Activated CD4-positive, alpha-beta T cell treated with anti-CD3 and anti-CD28 coated beads for 36 hours (primary cell): ENCODE measurements at regions of chr9 and their contacts with region 1.

Region 1: GRCh38 chr9:15231788-15232635 is 75.0 kb downstream of the TTC39B start:
- DNase-seq: peak; percentile 51
- ATAC-seq: peak; percentile 34
- H3K4me3 Mint-ChIP-seq: no peak overlapping the region
- H3K27ac Mint-ChIP-seq: no peak overlapping the region
- H3K4me1 Mint-ChIP-seq: peaks cover 52% of the 10 kb centered on the region
- H3K27me3 Mint-ChIP-seq: no peaks in the 10 kb centered on the region

Region 2: DNA sequence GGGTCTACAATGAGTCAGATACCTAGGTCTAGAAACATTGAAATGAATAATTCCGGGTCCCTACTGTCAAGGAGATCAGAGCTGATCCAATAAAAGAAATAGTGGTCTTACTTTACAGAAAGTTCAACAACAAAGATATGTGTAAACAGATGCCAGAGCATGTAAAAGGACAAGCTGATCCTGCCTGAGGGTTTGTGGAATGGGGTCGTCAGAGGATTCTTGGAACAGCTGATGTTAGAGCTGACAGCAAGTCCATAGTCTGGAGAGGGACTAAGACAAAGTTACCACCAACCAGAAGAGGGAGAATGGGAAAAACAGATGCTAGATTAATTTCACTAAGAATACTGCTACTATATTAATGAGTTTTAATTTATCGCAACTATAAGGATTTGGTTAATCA is 393.3 kb before region 1 on chr9:
- CTCF ChIA-PET with region 1: no interaction called
- POLR2A ChIA-PET with region 1: no interaction called
- intact Hi-C with region 1: no loop called
- DNase-seq: no peak
- ATAC-seq: no peak
- H3K4me3 Mint-ChIP-seq: no peak overlapping the region
- H3K27ac Mint-ChIP-seq: no peak overlapping the region
- H3K4me1 Mint-ChIP-seq: no peaks in the 10 kb centered on the region
- H3K27me3 Mint-ChIP-seq: peaks cover 17% of the 10 kb centered on the region

Region 3: DNA sequence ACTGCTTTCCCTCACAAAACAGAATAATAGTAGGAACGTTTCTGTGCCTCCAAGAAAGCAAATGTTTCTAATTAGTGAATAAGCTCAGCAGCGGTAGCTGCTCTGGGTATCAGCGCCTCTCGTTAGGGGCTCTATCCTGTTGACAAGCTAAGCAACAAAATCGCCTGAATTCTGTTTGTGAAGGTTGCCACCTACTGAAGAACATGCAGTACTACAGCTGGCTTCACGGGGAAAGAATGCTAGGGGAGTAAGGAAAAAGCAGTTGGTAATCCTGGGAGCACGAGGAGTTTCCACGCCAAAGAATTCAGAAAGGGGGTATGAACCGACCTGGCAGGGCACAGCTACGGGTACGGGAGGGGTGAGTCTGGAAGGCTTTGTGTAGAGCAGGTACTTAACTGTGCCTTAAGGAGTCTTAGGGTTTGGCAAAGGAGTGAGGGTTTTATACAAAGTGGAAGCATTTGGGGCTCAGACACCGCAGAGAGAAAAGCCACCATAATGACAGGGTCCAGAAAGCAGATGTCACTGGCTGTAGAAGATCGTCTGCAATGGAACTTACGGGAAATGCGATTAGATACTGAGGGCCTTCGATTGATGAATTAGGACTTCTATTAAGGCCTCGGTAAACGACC is 96.7 kb before region 1 on chr9:
- CTCF ChIA-PET with region 1: no interaction called
- POLR2A ChIA-PET with region 1: no interaction called
- intact Hi-C with region 1: no loop called
- DNase-seq: peak; percentile 57
- ATAC-seq: peak; percentile 88
- H3K4me3 Mint-ChIP-seq: no peak overlapping the region
- H3K27ac Mint-ChIP-seq: no peak overlapping the region
- H3K4me1 Mint-ChIP-seq: peaks cover 7% of the 10 kb centered on the region
- H3K27me3 Mint-ChIP-seq: no peaks in the 10 kb centered on the region

Region 4: DNA sequence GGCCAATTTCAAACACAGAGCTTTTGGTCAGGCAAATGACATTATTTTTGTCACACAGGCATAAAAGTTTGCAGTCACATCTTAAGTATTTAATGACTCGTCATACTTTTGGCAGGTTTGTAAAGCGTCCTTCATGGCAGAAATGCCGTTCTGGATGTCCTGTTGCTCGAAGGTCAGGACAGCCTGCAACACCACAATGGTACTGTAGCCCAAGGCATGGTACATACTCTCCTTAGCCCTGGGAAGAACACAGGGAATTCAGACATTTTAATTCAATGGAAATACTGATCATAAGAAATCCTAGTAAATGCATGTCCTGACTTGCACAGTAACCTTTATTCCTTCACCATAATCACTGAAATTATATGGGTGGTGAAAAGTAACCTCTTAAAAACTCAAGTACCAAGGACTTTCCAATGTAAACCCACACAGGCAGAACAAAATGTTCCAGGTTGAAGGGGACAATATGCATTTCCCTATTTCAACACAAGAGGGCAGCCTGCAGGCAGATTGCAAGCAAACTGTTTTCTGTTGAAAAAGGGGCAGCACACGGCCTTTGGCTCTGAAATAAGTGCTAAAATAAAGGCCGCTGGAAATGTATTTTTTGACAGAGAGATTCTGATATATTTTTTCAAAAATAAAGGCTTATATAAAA is 20.7 kb before region 1 on chr9:
- CTCF ChIA-PET with region 1: interaction called, 25 read pairs
- POLR2A ChIA-PET with region 1: interaction called, 9 read pairs
- intact Hi-C with region 1: loop called (anchors 1 kb)
- DNase-seq: peak; percentile 67
- ATAC-seq: peak; percentile 45
- H3K4me3 Mint-ChIP-seq: no peak overlapping the region
- H3K27ac Mint-ChIP-seq: no peak overlapping the region
- H3K4me1 Mint-ChIP-seq: peaks cover 23% of the 10 kb centered on the region
- H3K27me3 Mint-ChIP-seq: no peaks in the 10 kb centered on the region

Region 5: GRCh38 chr9:15220658-15221318 is 11.2 kb before region 1 on chr9:
- CTCF ChIA-PET with region 1: interaction called, 23 read pairs
- POLR2A ChIA-PET with region 1: no interaction called
- intact Hi-C with region 1: no loop called
- DNase-seq: no peak
- ATAC-seq: no peak
- H3K4me3 Mint-ChIP-seq: no peak overlapping the region
- H3K27ac Mint-ChIP-seq: no peak overlapping the region
- H3K4me1 Mint-ChIP-seq: peaks cover 30% of the 10 kb centered on the region
- H3K27me3 Mint-ChIP-seq: no peaks in the 10 kb centered on the region

Region 6: GRCh38 chr9:15246688-15247087 is 14.7 kb after region 1 on chr9:
- CTCF ChIA-PET with region 1: interaction called, 12 read pairs
- POLR2A ChIA-PET with region 1: no interaction called
- intact Hi-C with region 1: loop called in 1 of 2 experiments (anchors 2 kb)
- DNase-seq: no peak
- ATAC-seq: peak; percentile 44
- H3K4me3 Mint-ChIP-seq: no peak overlapping the region
- H3K27ac Mint-ChIP-seq: no peak overlapping the region
- H3K4me1 Mint-ChIP-seq: peaks cover 52% of the 10 kb centered on the region
- H3K27me3 Mint-ChIP-seq: no peaks in the 10 kb centered on the region

Region 7: DNA sequence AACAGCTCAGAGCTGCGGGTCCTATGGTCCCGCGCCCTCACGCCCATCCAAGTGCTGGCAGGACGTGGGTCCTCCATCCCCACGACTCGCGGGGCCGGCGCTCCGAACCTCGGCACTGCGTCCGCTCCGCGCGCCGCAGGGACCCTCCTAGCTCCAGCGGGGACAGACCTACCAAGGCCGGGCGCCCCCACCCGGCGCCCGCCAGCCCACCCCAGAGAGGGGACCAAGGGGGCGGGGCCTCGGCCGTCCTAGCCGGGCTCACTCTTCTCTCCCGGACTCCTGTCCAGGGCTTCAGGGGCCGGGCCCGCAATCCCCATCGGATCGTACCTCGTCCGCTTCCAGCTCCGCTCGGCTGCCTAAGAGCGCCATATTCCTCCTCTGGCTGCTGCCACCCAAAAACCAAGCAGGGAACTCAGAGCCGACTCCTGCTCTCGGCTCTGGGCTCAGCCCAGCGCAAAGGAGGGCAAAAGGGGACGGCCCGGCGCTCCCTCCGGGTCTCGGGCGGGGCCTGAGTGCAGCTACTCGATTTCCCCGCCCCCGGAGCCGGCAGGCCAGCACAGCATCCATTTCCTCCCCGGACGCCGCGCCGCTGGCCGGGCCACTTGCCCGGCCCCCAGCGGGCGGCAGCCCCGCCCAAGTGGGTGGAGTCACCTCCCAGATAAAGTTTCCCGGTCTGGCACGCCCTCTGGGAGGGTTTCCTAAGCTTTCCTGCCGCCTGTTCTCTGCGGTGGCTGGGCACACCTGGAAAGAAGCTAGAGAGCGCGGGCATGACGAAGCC is 74.9 kb after region 1 on chr9 and contains the start of gene TTC39B:
- CTCF ChIA-PET with region 1: interaction called, 4 read pairs
- POLR2A ChIA-PET with region 1: no interaction called
- intact Hi-C with region 1: loop called (anchors 2 kb)
- DNase-seq: peak; percentile 90
- ATAC-seq: peak; percentile 83
- H3K4me3 Mint-ChIP-seq: peak within 1 kb of the TSS; percentile 98
- H3K27ac Mint-ChIP-seq: peak within 1 kb of the TSS; percentile 98
- H3K4me1 Mint-ChIP-seq: peaks cover 59% of the 10 kb centered on the region
- H3K27me3 Mint-ChIP-seq: no peaks in the 10 kb centered on the region
- total RNA-seq, gene TTC39B: 26.4 to 34.4 TPM

Region 8: GRCh38 chr9:15422372-15423230 is 190.6 kb after region 1 on chr9 and contains the start of gene SNAPC3:
- CTCF ChIA-PET with region 1: no interaction called
- POLR2A ChIA-PET with region 1: no interaction called
- intact Hi-C with region 1: loop called (anchors 1 to 2 kb)
- DNase-seq: peak; percentile 96
- ATAC-seq: peak; percentile 97
- H3K4me3 Mint-ChIP-seq: peak within 1 kb of the TSS; percentile 95
- H3K27ac Mint-ChIP-seq: peak within 1 kb of the TSS; percentile 92
- H3K4me1 Mint-ChIP-seq: peaks cover 32% of the 10 kb centered on the region
- H3K27me3 Mint-ChIP-seq: no peaks in the 10 kb centered on the region
- total RNA-seq, gene SNAPC3: 37.8 to 39.6 TPM

Region 9: DNA sequence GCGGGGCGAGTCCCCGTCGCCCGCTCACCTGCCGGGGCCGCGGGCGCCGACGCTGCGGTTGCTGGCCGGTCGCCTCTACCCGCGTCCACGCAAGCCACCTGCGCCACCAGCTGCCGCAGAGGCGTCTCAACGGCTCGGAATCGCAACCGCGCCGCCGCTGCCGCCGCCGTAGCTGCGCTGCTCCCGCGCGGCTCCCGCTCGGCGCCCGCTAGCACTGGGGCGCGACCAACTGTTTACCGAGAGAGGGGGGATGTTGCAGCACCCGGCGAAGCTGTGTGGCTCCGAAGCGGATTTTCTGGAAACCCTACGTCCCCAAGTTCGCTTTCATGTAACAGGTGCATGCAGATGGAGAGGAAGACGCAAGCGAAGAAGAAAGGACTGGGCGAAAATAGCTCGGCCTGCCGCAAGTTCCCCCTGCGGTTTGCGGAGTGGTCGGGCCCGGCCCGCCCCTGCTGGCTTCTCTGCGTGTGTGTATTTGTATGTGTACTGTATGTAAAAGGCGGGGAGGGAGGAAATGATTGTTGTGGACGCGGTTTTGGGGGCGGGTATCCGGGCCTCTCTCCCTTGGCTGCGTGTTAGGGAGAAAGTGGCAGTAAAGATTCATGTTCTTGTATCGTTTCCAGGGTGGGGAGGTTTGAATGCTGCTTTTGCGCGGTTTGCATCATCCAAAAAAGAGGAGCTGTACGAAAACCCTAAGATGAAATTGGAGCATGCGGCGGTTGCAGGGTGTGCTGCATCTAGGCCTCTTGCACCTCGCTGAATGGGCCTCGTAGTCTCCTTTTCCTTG is 279.0 kb after region 1 on chr9 and contains the start of gene PSIP1:
- CTCF ChIA-PET with region 1: no interaction called
- POLR2A ChIA-PET with region 1: no interaction called
- intact Hi-C with region 1: loop called in 1 of 2 experiments (anchors 2 kb)
- DNase-seq: peak; percentile 92
- ATAC-seq: peak; percentile 86
- H3K4me3 Mint-ChIP-seq: peak within 1 kb of the TSS; percentile 85
- H3K27ac Mint-ChIP-seq: peak within 1 kb of the TSS; percentile 98
- H3K4me1 Mint-ChIP-seq: peaks cover 48% of the 10 kb centered on the region
- H3K27me3 Mint-ChIP-seq: no peaks in the 10 kb centered on the region
- total RNA-seq, gene PSIP1: 139 to 189 TPM

Region 10: GRCh38 chr9:15578714-15579113 is 346.7 kb after region 1 on chr9:
- CTCF ChIA-PET with region 1: no interaction called
- POLR2A ChIA-PET with region 1: no interaction called
- intact Hi-C with region 1: no loop called
- DNase-seq: no peak
- ATAC-seq: no peak
- H3K4me3 Mint-ChIP-seq: no peak overlapping the region
- H3K27ac Mint-ChIP-seq: no peak overlapping the region
- H3K4me1 Mint-ChIP-seq: no peaks in the 10 kb centered on the region
- H3K27me3 Mint-ChIP-seq: no peaks in the 10 kb centered on the region